ENCODE measurements at regions of chr3 and their contacts with region 1.

Region 1: GRCh38 chr3:57112206-57112605 is 51.7 kb downstream of the SPATA12 start:
- DNase-seq: no peak
- H3K4me3 ChIP-seq: no peak overlapping the region
- H3K27ac ChIP-seq: no peak overlapping the region
- H3K4me1 ChIP-seq: peaks cover 0 to 12% (median 8%) of the 10 kb centered on the region in 4 experiments; a peak in 4 of 7 replicates
- H3K27me3 ChIP-seq: no peaks in the 10 kb centered on the region
- CTCF ChIP-seq: peak; percentile 30 to 53 (median 34); a peak in 3 of 4 replicates
- EP300 ChIP-seq: no peak
- POLR2A ChIP-seq: no peak
- RAD21 ChIP-seq: peak in 1 of 2 experiments; percentile 34; a peak in 1 of 4 replicates

Region 2: DNA sequence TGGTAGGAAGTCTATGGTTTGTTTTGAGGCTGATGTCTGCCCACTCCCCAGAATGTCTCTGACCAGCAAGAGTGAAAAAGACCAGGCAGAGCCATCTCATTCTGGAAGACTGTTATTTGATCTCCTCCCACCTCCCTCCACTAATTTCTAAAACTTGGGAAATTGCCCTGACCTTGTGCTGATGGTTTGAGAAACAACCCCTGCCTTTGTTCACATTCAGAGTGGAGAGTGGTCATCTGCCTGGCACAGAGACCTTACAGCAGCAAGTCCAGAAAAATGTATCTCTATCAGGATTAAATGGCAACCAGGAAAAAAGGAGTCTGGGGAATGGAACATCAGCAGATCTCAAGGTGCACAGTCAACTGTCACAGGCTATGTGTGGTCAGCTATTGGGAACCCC is 26.0 kb before region 1 on chr3:
- CTCF ChIA-PET with region 1: no interaction called
- POLR2A ChIA-PET with region 1: no interaction called
- DNase-seq: no peak
- H3K4me3 ChIP-seq: no peak overlapping the region
- H3K27ac ChIP-seq: no peak overlapping the region
- H3K4me1 ChIP-seq: no peaks in the 10 kb centered on the region; a peak in 2 of 7 replicates
- H3K27me3 ChIP-seq: no peaks in the 10 kb centered on the region
- CTCF ChIP-seq: no peak
- EP300 ChIP-seq: no peak
- POLR2A ChIP-seq: no peak
- RAD21 ChIP-seq: no peak

Region 3: GRCh38 chr3:57158813-57159738 is 46.9 kb after region 1 on chr3:
- CTCF ChIA-PET with region 1: interaction called, 10 read pairs
- POLR2A ChIA-PET with region 1: interaction called, 5 read pairs
- DNase-seq: peak in 1 of 2 experiments; percentile 51
- H3K4me3 ChIP-seq: peak overlapping the region in 1 of 4 experiments; percentile 19; a peak in 1 of 8 replicates
- H3K27ac ChIP-seq: no peak overlapping the region
- H3K4me1 ChIP-seq: peaks cover 13 to 51% (median 28%) of the 10 kb centered on the region in 4 experiments
- H3K27me3 ChIP-seq: peaks cover 6 to 47% (median 23%) of the 10 kb centered on the region in 4 experiments
- CTCF ChIP-seq: peak in 1 of 3 experiments; percentile 2; a peak in 1 of 4 replicates
- EP300 ChIP-seq: no peak
- POLR2A ChIP-seq: no peak
- RAD21 ChIP-seq: 0 out of 4 replicates have a peak, but pooled peaks of 1 of the 2 experiments have one; percentile 10

Measured in H1 (cell line).